Right ventricle myocardium inferior (tissue), 1 donor: ENCODE measurements at regions of chr5 and their contacts with region 1.

Region 1: DNA sequence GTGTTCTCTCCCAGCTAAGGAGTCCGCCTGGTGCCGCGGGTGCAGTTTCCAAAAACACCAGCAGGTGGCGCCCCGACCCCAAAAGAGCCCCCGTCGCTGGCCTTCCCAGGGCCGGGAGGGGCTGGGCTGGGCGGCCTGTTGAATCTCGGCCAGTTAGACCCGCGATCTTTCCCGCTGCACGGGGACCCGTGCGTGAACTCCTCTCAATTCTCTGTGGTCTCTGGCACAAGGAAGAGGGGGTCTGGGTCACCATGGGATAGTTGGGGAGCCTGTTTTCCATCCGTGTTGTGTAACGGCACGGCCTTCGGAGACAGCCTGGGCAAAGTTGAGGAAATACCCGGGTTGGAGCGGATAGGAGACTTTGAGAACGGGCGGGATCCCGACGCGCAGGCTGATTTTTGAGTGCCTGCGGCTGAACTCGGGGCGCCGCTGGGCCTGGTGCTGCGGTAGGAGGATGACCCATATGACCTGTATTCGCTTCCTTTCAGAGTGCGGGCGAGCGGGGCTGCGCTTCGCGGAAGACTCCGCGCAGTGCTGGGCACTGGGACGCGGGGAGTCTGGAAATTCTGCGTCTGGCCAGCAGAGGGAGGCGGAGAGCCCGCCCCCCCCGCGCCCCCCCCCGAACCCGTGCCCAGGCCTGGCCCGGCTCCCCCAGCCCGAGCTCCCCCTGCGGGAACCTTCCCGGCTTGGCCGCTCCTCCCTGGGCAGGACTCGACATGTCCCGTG is 7.9 kb upstream of the PSD2 start:
- DNase-seq: peak; percentile 91
- ATAC-seq: peak; percentile 90

Region 2: GRCh38 chr5:139844472-139845145 is 56.9 kb after region 1 on chr5:
- intact Hi-C with region 1: loop called (anchors 1 kb)
- DNase-seq: no peak
- ATAC-seq: no peak

Region 3: DNA sequence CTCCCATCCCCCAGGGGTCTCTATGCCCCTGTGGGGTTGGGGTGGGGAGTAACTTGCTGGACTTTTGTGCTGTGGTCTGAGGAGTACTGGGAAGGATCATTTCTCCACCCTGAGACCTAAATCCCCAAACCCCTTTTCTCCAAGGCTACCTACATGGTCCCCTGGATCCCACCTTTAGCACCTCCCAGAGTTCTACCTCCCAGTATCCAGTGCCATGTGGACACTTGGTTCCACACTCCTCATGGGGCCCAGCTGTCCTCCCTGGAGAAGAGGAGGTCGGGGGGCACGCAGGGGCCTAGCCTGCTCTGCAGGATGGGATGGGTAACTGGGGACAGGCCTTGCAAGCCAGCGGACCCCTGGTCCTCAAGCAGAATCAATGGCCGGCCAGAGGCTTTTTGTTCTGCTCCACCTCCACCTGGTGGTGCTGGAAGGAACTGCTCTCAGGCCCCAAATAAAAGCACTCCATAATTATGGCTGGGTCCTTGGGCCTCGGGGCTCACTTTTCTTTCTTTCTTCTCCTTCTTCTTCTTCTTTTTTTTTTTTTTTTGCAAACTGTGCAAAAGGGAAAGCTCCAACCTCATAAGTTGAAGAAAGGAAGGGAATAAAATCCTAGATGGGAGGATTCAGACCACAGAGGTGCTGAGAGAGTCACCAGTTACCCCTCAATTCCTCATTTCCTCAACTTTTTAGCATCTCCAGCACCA is 76.3 kb after region 1 on chr5:
- intact Hi-C with region 1: loop called (anchors 1 kb)
- DNase-seq: no peak
- ATAC-seq: peak; percentile 80

Region 4: DNA sequence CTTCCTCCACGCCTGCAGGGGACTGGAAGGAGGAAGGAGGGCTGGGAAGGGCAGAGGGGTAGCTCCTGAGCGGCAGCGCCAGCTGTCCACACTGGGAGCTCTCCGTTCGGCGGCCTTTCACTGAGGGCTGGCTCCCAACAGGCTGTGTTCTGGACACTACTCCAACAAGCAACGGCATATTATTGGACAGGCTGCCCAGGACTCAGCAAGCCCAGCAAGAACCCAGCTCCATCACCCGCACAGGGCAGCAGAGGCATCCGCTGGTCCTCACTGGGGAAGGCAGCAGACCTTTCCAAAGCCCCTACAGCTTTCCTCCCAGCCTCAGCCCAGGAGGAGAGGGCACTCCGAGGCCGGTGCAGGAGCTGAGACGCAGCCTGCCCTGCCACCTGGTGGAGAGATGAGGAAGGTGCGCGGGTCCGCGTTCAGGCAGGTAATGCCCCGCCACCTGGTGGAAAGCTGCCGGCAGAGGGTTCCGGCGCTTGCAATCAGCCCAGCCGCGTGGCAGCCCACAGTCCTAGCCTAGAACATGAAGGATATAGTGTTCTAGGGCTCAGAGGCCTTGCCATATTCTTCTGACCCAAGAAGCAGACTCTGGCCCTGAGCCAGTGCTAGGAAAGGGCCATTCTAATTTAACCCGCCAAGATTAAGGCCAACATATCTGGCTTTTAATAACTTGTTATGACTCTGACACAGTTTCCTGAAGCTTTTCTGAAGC is 181.0 kb after region 1 on chr5:
- intact Hi-C with region 1: loop called (anchors 1 kb)
- DNase-seq: peak; percentile 87
- ATAC-seq: peak; percentile 92

Region 5: DNA sequence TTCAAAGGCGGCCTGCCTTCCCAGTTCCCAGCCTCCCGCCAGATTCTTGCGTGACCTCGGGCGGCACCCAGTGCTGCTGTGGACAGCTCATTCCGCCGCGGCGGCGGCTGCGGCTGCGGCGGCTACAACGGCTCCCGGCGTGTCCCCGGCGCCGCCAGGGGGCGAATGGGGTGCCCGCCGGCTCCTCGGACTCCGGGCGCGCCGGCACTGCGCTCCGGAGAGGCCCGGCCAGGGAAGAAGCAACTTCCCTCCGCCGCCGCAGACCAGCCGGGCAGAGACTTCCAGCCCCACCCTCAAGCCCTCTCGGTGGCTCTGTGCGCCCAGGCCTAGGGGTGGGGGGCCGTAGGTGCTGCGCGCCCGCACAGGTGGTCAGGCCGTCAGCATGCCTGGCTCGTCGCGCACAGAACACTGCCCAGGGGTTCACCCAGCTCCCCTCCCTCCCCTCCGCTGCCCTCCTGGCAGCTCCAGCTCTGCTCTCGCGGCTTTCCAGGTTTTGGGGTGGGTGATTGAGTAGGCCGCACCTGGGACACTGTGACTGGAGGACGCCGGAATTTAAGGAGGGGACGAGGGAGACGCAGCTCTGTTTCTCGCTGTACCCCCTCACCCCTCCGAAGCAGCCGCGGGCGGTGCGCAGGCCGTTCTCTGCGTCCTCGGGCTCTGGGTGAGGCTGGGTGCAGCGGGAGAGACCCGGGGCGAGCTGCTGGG is 358.2 kb after region 1 on chr5:
- intact Hi-C with region 1: loop called (anchors 5 kb)
- DNase-seq: peak; percentile 87
- ATAC-seq: peak; percentile 93

Region 6: DNA sequence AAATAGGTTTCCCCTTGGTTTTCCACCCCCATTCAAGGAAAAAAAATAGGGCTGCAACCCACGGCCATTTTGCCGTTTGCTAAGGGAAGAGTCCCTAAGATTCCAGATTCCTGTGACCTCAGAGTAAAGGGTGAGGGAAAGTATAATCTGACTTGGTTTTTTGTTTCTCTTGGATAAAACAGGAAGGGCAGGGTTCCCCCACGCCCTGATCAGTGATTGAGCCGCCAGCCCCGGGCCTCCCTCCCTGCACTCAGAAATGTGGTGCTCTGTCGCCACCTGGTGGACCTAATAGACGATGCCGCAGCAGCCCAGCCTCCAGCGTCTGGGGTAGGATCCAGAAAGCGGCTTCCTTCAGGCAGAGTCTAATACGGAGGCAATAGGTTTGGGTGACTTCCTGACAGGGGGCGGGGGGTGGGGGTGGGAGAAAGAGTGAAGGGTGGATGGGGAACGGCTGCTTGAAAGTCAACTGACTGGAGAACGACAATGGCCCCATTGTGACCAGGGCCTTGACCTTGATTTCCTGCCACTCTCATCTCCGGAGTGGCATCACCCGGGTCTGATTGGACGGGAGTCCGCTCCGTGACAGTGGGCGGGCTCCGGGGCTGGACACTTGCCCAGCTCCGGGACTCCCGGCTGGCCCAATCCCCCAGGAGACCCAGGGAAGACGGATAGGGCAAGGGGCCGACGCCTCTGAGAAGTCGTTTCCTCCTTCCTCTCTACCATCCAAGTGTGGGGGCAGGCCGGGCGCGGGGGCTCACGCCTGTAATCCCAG is 369.5 kb after region 1 on chr5:
- intact Hi-C with region 1: loop called (anchors 1 kb)
- DNase-seq: peak; percentile 96
- ATAC-seq: peak; percentile 96

Region 7: DNA sequence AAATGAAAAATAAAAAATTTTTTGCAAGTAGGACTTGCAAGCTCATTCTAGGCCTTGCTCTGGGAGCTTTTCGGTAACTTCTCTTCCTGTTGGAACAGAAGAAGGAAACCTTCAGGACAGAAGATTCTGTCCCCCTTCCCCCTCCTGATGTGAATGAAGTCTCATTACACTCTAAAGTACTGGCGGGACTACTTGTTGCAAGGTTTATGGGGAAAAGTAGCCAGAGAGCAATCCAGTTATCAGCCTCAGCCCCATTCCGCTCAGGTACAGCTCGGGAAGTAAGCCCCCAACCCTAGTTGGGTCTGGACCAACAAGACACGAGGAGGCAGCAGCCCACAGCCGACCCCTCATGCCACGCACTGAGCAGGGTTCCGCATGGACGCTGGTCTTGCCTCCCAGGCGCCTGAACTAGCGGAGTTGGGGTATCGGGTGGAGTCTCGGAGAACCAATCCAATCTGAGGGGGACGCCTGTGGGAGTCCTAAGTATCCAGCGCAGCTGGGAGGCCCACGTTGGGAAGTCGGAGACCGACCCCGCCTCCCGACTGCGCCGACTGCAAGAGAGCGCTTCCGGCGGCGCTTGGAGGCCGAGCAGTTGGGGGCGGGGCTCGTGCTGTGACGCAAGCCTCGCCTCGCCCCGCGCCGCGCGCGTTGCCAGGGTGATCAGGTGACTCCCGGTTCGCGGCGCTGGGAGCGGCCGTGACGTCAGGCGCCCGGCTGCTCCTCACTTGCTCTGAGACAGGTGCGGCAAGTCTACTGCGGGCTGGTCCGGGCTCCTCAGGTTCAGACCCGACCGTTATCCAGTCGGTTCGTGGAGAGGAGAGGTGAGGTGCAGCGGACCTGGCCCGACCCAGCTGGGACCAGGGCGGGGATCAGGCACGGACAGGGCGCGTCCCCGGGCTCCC is 387.0 kb after region 1 on chr5 and contains the start of gene CYSTM1:
- intact Hi-C with region 1: no loop called
- DNase-seq: peak; percentile 99
- ATAC-seq: peak; percentile 96
- total RNA-seq, gene CYSTM1: 67.0 TPM